CD4-positive, alpha-beta T cell (primary cell): ENCODE measurements at regions of chr18 and their contacts with region 1.

Region 1: DNA sequence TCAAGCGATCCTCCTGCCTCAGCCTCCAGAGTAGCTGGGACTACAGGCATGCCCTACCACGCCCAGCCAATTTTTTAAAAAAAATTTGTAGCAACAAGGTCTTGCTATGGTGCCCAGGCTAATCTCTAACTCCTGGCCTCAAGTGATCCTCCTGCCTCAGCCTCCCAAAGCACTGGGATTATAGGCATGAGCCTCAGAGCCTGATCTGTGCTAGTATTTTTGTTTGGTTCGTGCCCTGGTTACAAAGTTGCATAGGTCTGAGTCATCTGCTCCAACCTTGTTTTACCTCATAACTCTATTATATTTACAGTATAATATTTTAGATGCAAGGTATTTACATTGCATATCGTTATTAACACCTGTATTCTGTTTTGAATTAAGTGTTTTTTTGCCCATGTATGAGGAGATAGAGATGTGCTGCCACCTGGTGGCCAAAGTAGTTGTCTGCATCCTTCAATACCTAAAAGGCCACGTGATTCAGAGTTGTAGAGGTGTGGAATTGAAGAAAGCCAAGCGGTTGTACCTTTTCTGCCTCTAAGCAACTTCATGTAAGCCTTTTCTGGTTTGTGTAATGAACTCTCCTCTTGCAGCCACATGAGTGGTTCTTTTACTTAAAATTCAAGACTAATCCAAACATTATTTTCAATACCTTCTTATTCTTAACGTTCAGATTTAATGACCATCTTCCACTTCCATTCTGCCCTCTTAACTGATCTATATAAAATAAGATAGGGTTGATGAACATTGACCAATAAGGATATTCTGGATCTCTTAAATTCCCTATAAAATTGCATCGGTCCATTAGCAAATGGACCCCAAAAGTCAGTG is 19.9 kb upstream of the CABYR start:
- DNase-seq: peak; percentile 69 to 92 (median 76)
- ATAC-seq: peak; percentile 90
- H3K4me3 ChIP-seq: no peak overlapping the region
- H3K4me3 Mint-ChIP-seq: no peak overlapping the region
- H3K27ac ChIP-seq: no peak overlapping the region
- H3K27ac Mint-ChIP-seq: peak overlapping the region; percentile 73
- H3K4me1 ChIP-seq: peaks cover 6% of the 10 kb centered on the region
- H3K4me1 Mint-ChIP-seq: peaks cover 42% of the 10 kb centered on the region
- H3K27me3 ChIP-seq: no peaks in the 10 kb centered on the region
- H3K27me3 Mint-ChIP-seq: no peaks in the 10 kb centered on the region
- CTCF ChIP-seq: peak; percentile 91

Region 2: DNA sequence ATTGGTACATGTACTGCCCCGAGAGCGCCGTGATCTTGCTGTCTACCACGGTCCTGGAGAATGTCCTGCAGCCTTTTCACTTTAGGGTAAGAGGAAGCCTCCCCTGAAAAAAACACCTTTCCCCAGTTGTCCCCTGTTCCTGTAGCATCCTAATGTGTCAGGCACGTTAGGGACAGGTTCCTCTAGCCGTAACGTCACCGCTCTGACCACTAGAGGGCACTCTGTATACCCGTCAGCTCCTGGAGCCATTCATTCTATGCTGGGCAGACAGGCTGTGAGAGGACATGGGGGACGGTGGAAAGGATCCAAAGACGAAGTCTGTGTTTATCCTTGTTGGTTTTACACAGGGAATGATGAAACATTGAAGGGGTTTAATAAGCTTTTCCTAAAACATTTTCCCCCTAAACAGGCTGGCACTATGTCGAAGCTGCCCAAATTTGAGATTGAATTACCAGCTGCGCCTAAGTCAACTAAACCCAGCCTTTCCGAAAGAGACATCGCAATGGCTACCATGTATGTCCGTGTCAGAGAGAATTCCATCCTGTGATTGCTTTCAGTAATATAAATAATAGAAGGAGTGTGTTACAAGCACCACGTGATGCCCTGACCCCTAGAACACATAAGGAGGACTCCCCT is 602.9 kb before region 1 on chr18:
- CTCF ChIA-PET with region 1: no interaction called
- POLR2A ChIA-PET with region 1: no interaction called
- intact Hi-C with region 1: loop called (anchors 2 to 5 kb)
- DNase-seq: peak; percentile 64 to 88 (median 66)
- ATAC-seq: peak; percentile 99
- H3K4me3 ChIP-seq: no peak overlapping the region
- H3K4me3 Mint-ChIP-seq: no peak overlapping the region
- H3K27ac ChIP-seq: no peak overlapping the region
- H3K27ac Mint-ChIP-seq: peak overlapping the region; percentile 28
- H3K4me1 ChIP-seq: peaks cover 10% of the 10 kb centered on the region
- H3K4me1 Mint-ChIP-seq: peaks cover 24% of the 10 kb centered on the region
- H3K27me3 ChIP-seq: no peaks in the 10 kb centered on the region
- H3K27me3 Mint-ChIP-seq: no peaks in the 10 kb centered on the region
- CTCF ChIP-seq: peak; percentile 87

Region 3: GRCh38 chr18:23619388-23619881 is 499.5 kb before region 1 on chr18:
- CTCF ChIA-PET with region 1: interaction called, 9 read pairs
- POLR2A ChIA-PET with region 1: no interaction called
- intact Hi-C with region 1: loop called (anchors 1 to 2 kb)
- DNase-seq: peak in 5 of 14 experiments; percentile 0 to 36 (median 5)
- ATAC-seq: peak; percentile 37
- H3K4me3 ChIP-seq: peak overlapping the region; percentile 39
- H3K4me3 Mint-ChIP-seq: peak overlapping the region; percentile 48
- H3K27ac ChIP-seq: no peak overlapping the region
- H3K27ac Mint-ChIP-seq: no peak overlapping the region
- H3K4me1 ChIP-seq: peaks cover 12% of the 10 kb centered on the region
- H3K4me1 Mint-ChIP-seq: peaks cover 6% of the 10 kb centered on the region
- H3K27me3 ChIP-seq: peaks cover 26 to 30% of the 10 kb centered on the region in 2 experiments
- H3K27me3 Mint-ChIP-seq: peaks cover 52% of the 10 kb centered on the region
- CTCF ChIP-seq: no peak

Region 4: DNA sequence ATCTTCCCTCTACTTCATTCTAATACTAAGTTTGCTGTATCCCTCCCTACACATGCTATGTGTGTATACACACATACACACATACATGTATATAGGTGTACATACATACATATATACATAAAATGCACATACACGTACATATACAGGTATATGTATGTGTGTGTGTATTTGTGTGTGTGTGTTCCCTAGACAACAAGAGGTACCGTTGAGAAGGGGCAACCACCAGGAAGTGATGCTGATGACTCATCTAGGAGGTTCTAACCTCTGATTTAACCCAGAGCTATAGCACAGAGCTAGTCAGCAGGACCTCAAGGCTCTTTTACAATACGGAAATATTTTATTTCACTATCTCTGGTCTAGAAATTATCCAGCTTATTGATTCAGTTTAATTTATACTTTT is 290.5 kb before region 1 on chr18:
- CTCF ChIA-PET with region 1: interaction called, 7 read pairs
- POLR2A ChIA-PET with region 1: no interaction called
- intact Hi-C with region 1: loop called (anchors 2 to 5 kb)
- DNase-seq: peak in 12 of 14 experiments; percentile 4 to 91 (median 36)
- ATAC-seq: peak; percentile 96
- H3K4me3 ChIP-seq: no peak overlapping the region
- H3K4me3 Mint-ChIP-seq: no peak overlapping the region
- H3K27ac ChIP-seq: peak overlapping the region in 1 of 2 donors; percentile 70
- H3K27ac Mint-ChIP-seq: peak overlapping the region; percentile 25
- H3K4me1 ChIP-seq: peaks cover 15% of the 10 kb centered on the region
- H3K4me1 Mint-ChIP-seq: peaks cover 33% of the 10 kb centered on the region
- H3K27me3 ChIP-seq: no peaks in the 10 kb centered on the region
- H3K27me3 Mint-ChIP-seq: no peaks in the 10 kb centered on the region
- CTCF ChIP-seq: no peak

Region 5: DNA sequence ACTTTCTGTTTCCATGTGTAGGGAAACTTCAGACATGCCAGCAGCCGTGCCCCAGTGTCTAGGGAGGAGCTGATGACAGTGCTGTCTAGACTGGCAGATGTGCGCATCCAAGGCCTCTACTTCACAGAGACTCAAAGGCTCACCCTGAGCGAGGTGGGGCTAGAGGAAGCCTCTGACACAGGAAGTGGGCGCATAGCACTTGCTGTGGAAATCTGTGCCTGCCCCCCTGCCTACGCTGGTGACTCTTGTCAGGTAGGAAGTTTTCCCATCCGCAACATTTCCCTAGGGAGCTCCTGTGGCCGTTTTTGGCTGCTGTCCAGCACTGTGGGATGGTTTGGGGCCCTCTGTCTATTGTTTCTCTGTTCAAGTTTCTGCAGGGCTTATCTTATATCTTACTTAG is 247.6 kb before region 1 on chr18:
- CTCF ChIA-PET with region 1: no interaction called
- POLR2A ChIA-PET with region 1: no interaction called
- intact Hi-C with region 1: loop called in 1 of 2 experiments (anchors 5 kb)
- DNase-seq: peak; percentile 54 to 90 (median 72)
- ATAC-seq: peak; percentile 94
- H3K4me3 ChIP-seq: no peak overlapping the region
- H3K4me3 Mint-ChIP-seq: peak overlapping the region; percentile 73
- H3K27ac ChIP-seq: peak overlapping the region in 1 of 2 donors; percentile 9
- H3K27ac Mint-ChIP-seq: peak overlapping the region; percentile 93
- H3K4me1 ChIP-seq: peaks cover 35% of the 10 kb centered on the region
- H3K4me1 Mint-ChIP-seq: peaks cover 55% of the 10 kb centered on the region
- H3K27me3 ChIP-seq: no peaks in the 10 kb centered on the region
- H3K27me3 Mint-ChIP-seq: no peaks in the 10 kb centered on the region
- CTCF ChIP-seq: no peak

Region 6: GRCh38 chr18:23967321-23968089 is 151.5 kb before region 1 on chr18:
- CTCF ChIA-PET with region 1: no interaction called
- POLR2A ChIA-PET with region 1: no interaction called
- intact Hi-C with region 1: loop called (anchors 2 kb)
- DNase-seq: peak in 5 of 14 experiments; percentile 10 to 83 (median 48)
- ATAC-seq: no peak
- H3K4me3 ChIP-seq: no peak overlapping the region
- H3K4me3 Mint-ChIP-seq: no peak overlapping the region
- H3K27ac ChIP-seq: no peak overlapping the region
- H3K27ac Mint-ChIP-seq: peak overlapping the region; percentile 95
- H3K4me1 ChIP-seq: peaks cover 86% of the 10 kb centered on the region
- H3K4me1 Mint-ChIP-seq: peaks cover 82% of the 10 kb centered on the region
- H3K27me3 ChIP-seq: no peaks in the 10 kb centered on the region
- H3K27me3 Mint-ChIP-seq: no peaks in the 10 kb centered on the region
- CTCF ChIP-seq: no peak

Region 7: DNA sequence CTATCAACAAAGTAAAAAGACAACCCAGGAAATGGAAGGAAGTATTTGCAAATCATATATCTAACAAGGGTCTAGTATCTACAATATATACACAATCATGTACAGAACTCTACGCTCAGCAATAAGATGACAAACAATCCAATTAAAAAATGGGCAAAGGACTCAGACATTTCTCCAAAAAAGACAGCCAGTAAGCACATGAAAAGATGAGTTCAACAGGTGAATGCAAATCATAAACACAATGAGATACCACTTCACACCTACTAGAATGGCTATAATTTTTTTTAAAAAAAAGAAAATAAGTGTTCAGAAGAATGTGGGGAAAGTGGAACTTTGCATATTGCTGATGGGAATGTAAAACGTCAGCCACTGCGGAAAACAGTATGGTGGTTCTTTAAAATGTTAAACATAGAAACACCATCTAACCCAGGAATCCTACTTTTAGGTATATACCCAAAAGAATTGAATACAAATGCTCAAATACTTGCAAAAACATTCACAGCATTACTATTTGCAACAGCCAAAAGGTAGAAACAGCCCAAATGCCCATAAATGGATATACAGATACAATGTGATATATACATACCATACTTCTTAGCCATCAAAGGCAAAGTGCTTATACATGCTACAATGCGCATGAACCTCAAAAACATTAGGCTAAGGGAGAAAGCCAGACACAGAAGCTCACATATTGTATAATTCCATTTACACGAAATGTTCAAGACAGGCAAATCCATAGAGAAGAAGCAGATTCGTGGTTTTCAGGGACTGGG is 141.1 kb after region 1 on chr18:
- CTCF ChIA-PET with region 1: no interaction called
- POLR2A ChIA-PET with region 1: no interaction called
- intact Hi-C with region 1: no loop called
- DNase-seq: no peak
- ATAC-seq: no peak
- H3K4me3 ChIP-seq: no peak overlapping the region
- H3K4me3 Mint-ChIP-seq: no peak overlapping the region
- H3K27ac ChIP-seq: no peak overlapping the region
- H3K27ac Mint-ChIP-seq: no peak overlapping the region
- H3K4me1 ChIP-seq: no peaks in the 10 kb centered on the region
- H3K4me1 Mint-ChIP-seq: no peaks in the 10 kb centered on the region
- H3K27me3 ChIP-seq: no peaks in the 10 kb centered on the region
- H3K27me3 Mint-ChIP-seq: no peaks in the 10 kb centered on the region
- CTCF ChIP-seq: no peak